Esophagus squamous epithelium (tissue), 5 donors: ENCODE measurements at regions of chr2 and their contacts with region 1.

Region 1: DNA sequence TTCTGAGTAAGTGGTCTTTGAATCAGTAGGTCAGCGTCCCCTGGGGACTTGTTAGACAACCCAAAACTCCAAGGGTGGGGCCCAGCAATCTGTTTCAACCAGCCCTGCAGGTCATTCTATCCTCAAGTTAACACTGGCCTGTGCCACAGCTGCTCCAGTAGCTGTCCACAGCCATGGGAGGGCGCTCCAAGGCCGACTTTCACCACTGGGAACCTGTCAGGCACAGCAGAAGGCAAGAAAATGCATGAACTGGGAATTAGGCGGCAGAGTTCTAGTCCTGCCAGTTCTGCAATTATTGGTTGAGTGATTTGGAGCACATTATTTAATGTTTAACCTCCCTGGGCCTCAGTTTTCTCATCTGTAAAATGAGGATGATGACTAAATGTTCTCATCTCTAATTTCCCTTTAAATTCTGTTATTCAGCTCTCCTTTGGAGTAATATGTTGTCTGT is 17.4 kb upstream of the MRPL33 start:
- DNase-seq: no peak
- H3K4me3 ChIP-seq: no peak overlapping the region
- H3K27ac ChIP-seq: no peak overlapping the region
- H3K4me1 ChIP-seq: peaks cover 0 to 19% (median 7%) of the 10 kb centered on the region in 3 donors
- H3K27me3 ChIP-seq: no peaks in the 10 kb centered on the region
- CTCF ChIP-seq: peak; percentile 55 to 97 (median 89)
- POLR2A ChIP-seq: no peak

Region 2: DNA sequence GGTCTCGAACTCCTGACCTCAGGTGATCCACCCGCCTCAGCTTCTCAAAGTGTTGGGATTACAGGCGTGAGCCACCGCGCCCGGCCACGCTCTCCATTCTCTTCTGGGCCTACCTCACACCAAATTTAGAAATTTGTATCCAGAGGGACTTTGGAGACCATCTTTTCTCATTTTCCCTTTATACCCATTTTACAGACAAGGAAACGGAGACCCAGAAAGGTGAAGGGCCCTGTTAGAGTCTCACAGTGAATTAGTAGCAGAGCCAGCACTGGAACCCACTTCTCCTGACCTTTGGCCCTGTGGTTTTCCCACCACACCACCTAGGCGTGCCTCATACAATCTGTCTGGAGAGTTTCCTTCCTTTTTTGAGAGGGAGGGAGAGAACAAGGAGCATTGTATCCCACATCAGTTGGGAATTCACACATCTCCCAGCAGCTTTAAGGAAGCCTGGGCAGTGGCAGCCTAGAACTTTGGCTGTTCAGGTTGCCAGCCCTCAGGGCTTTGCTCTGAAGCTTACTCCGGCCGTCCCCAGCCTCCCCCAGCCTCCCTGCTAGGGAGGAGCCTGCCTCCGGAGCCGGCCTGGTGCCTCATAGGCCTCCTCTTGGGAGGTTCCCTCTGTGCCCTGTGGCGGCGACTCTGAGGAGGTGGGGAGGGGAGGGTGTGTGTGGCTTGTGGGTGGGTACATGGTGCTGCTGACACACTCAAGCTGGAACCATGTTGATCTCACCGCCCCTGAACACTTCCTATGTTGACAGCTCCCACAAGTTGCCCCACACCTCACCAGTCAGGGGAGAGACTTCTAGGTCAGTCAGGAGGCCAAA is 652.3 kb after region 1 on chr2:
- intact Hi-C with region 1: loop called (anchors 10 kb)
- DNase-seq: no peak
- H3K4me3 ChIP-seq: no peak overlapping the region
- H3K27ac ChIP-seq: peak overlapping the region; percentile 68 to 84 (median 80)
- H3K4me1 ChIP-seq: peaks cover 74 to 100% (median 95%) of the 10 kb centered on the region in 3 donors
- H3K27me3 ChIP-seq: no peaks in the 10 kb centered on the region
- CTCF ChIP-seq: no peak
- POLR2A ChIP-seq: peak in 1 of 4 donors; percentile 30